ENCODE measurements at regions of chr1 and their contacts with region 1.

Region 1: GRCh38 chr1:151281969-151282882 is at the start of gene ZNF687:
- DNase-seq: peak; percentile 99 to 100
- H3K4me3 ChIP-seq: peak within 1 kb of the TSS; percentile 62
- H3K27ac ChIP-seq: peak within 1 kb of the TSS; percentile 90
- H3K4me1 ChIP-seq: peaks cover 13% of the 10 kb centered on the region; the same call in 1 of the 2 replicates
- H3K27me3 ChIP-seq: no peaks in the 10 kb centered on the region
- CTCF ChIP-seq: no peak
- total RNA-seq, gene ZNF687: 26.6 and 28.7 TPM in 2 replicates

Region 2: DNA sequence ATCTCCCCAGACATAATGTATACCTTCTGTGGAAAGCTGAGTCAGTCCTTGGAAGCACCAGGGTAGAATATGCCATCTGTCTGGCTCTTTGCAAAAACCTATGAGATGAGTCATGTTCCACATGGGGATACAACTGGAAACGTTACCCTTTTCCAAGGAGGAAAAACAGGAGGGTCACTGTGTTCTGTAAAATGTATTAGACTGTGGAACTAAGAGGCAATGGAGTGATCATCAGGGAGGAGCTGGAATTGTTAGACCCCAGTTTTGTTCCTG is 43.8 kb before region 1 on chr1:
- CTCF ChIA-PET with region 1: interaction called, 11 read pairs
- POLR2A ChIA-PET with region 1: no interaction called
- intact Hi-C with region 1: no loop called
- DNase-seq: no peak
- H3K4me3 ChIP-seq: no peak overlapping the region
- H3K27ac ChIP-seq: no peak overlapping the region
- H3K4me1 ChIP-seq: no peaks in the 10 kb centered on the region
- H3K27me3 ChIP-seq: no peaks in the 10 kb centered on the region
- CTCF ChIP-seq: no peak

Measured in PC-9 (cell line).